Panc1 (cell line): ENCODE measurements at regions of chr1 and their contacts with region 1.

Region 1: GRCh38 chr1:31164287-31164686 is 75.4 kb downstream of the NKAIN1 start:
- DNase-seq: no peak
- ATAC-seq: no peak
- H3K4me3 ChIP-seq: no peak overlapping the region
- H3K27ac ChIP-seq: no peak overlapping the region
- H3K4me1 ChIP-seq: no peaks in the 10 kb centered on the region
- H3K27me3 ChIP-seq: no peaks in the 10 kb centered on the region
- CTCF ChIP-seq: no peak

Region 2: DNA sequence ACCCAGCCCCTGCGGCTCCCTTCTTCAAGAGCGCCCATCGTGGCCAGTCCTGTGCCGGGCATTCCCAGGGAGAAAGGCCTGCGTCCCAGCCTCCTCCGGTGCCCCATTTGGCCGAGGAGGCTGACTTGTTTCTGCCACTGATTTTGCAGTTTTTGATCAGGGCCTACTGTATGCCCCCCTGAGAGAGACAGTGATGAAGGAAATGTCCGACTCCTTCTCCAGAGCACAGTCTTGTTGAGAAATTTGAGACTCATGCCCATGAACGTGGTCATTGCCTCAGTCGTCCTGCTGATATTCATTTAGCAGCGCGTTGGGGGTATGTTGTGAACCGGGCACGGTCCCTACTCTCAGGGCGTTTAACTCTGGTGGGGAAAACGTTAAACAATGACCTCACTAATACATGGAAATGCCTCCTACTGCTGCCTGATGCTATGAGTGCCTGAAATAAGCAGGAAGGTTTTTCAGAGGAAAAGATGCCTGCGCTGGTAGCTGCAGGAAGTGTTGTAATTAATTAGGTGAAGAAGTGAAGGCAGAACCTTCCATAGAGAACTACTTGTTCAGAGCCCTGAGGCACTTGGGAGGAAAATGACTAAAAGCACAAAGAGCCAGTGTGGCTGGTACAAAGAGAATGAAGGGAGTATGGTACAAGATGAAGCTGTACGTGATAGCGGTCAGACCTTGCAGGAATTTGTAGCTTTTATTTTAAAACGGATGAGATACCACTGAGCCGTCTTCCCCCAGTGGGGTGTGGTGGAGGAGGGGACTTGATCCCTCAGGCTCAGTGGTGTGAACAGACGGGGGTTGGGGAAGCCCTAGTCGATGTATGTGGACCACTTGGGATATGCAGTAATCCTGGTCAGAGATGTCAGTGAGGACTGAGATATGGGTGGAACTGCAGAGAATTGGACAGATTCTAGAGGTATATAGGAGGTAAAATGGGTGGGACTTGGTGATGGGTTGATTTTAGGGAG is 133.3 kb after region 1 on chr1:
- CTCF ChIA-PET with region 1: interaction called, 11 read pairs
- POLR2A ChIA-PET with region 1: no interaction called
- in situ Hi-C with region 1: no loop called
- intact Hi-C with region 1: no loop called
- DNase-seq: no peak
- ATAC-seq: no peak
- H3K4me3 ChIP-seq: peak overlapping the region; percentile 97 to 100
- H3K27ac ChIP-seq: peak overlapping the region; percentile 98
- H3K4me1 ChIP-seq: peaks cover 15% of the 10 kb centered on the region
- H3K27me3 ChIP-seq: no peaks in the 10 kb centered on the region
- CTCF ChIP-seq: no peak

Region 3: DNA sequence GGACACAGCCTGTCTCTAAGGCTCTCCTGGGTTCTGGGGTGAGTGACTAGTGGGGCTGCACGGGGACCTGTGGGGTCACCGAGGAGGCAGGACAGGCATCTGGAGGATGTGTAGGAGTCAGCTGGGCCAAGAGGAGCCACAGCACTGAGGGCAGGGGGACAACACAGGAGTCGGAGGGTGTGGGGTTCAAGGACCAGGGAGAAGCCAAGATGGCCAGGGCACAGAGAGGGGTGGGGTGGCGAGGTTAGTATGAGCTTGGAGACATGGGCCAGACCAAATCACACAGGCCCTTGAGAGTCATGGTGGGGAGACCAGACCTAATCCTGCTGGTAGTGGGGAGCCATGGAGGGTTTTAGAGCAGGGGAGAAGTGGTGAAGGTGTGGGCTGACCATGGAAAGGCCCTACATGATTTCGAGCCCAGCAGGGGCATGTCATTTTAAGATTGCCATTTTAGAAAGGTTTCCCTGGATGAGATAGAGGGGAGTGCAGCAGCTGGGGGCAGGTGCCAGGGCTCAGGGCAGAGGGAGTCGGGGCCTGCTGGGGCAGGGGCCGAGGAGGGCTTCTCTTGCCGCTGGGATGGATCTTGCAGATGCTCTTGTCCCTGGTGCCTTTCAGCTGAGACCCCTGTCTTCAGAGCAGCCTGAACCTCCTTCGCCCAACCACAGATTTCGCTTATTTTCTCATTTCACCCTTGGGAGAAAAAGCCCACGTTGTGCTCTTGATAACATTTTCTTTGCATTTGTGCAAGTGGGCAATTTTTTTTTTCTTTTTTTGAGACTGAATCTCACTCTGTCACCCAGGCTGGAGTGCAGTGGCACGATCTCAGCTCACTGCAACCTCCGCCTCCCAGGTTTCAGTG is 271.5 kb after region 1 on chr1:
- CTCF ChIA-PET with region 1: no interaction called
- POLR2A ChIA-PET with region 1: interaction called, 19 read pairs
- in situ Hi-C with region 1: no loop called
- intact Hi-C with region 1: no loop called
- DNase-seq: no peak
- ATAC-seq: no peak
- H3K4me3 ChIP-seq: no peak overlapping the region
- H3K27ac ChIP-seq: no peak overlapping the region
- H3K4me1 ChIP-seq: no peaks in the 10 kb centered on the region
- H3K27me3 ChIP-seq: no peaks in the 10 kb centered on the region
- CTCF ChIP-seq: no peak